ENCODE measurements at regions of chr4 and their contacts with region 1.

Region 1: GRCh38 chr4:28772066-28772465 is 1911.4 kb downstream of the STIM2 start:
- DNase-seq: peak; percentile 38
- ATAC-seq: peak; percentile 51; the same call in 1 of the 2 replicates
- H3K4me3 ChIP-seq: no peak overlapping the region
- H3K27ac ChIP-seq: no peak overlapping the region
- H3K4me1 ChIP-seq: no peaks in the 10 kb centered on the region
- H3K27me3 ChIP-seq: no peaks in the 10 kb centered on the region
- CTCF ChIP-seq: no peak

Region 2: GRCh38 chr4:27881705-27882104 is 890.4 kb before region 1 on chr4:
- CTCF ChIA-PET with region 1: no interaction called
- POLR2A ChIA-PET with region 1: no interaction called
- intact Hi-C with region 1: loop called (anchors 5 kb)
- DNase-seq: no peak
- ATAC-seq: no peak
- H3K4me3 ChIP-seq: no peak overlapping the region
- H3K27ac ChIP-seq: no peak overlapping the region
- H3K4me1 ChIP-seq: peaks cover 11% of the 10 kb centered on the region
- H3K27me3 ChIP-seq: no peaks in the 10 kb centered on the region
- CTCF ChIP-seq: no peak

Region 3: DNA sequence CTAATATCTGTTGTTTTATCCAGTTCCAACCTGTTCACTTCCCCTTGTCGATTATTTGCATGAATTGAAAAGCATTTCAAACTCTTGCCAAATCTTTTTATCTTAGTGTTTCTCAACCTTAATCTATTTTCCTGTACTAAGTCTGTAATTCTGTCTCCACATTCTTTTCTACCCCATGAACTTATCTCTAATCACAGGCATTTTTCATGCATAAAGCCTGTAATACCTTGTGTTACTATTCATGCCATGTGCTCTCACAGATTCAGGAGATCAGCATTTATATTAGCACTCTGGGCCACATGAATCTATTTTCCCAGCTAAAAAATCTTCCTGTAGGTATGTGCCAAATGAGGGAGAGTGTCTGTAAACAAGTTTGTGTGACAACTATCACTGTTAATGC is 550.5 kb before region 1 on chr4:
- CTCF ChIA-PET with region 1: no interaction called
- POLR2A ChIA-PET with region 1: no interaction called
- intact Hi-C with region 1: no loop called
- DNase-seq: no peak
- ATAC-seq: no peak
- H3K4me3 ChIP-seq: no peak overlapping the region
- H3K27ac ChIP-seq: no peak overlapping the region
- H3K4me1 ChIP-seq: no peaks in the 10 kb centered on the region
- H3K27me3 ChIP-seq: no peaks in the 10 kb centered on the region
- CTCF ChIP-seq: no peak

Region 4: GRCh38 chr4:28926156-28926555 is 154.1 kb after region 1 on chr4:
- CTCF ChIA-PET with region 1: no interaction called
- POLR2A ChIA-PET with region 1: no interaction called
- intact Hi-C with region 1: no loop called
- DNase-seq: no peak
- ATAC-seq: no peak
- H3K4me3 ChIP-seq: no peak overlapping the region
- H3K27ac ChIP-seq: no peak overlapping the region
- H3K4me1 ChIP-seq: no peaks in the 10 kb centered on the region
- H3K27me3 ChIP-seq: no peaks in the 10 kb centered on the region
- CTCF ChIP-seq: no peak